ENCODE measurements at regions of chr19 and their contacts with region 1.

Region 1: DNA sequence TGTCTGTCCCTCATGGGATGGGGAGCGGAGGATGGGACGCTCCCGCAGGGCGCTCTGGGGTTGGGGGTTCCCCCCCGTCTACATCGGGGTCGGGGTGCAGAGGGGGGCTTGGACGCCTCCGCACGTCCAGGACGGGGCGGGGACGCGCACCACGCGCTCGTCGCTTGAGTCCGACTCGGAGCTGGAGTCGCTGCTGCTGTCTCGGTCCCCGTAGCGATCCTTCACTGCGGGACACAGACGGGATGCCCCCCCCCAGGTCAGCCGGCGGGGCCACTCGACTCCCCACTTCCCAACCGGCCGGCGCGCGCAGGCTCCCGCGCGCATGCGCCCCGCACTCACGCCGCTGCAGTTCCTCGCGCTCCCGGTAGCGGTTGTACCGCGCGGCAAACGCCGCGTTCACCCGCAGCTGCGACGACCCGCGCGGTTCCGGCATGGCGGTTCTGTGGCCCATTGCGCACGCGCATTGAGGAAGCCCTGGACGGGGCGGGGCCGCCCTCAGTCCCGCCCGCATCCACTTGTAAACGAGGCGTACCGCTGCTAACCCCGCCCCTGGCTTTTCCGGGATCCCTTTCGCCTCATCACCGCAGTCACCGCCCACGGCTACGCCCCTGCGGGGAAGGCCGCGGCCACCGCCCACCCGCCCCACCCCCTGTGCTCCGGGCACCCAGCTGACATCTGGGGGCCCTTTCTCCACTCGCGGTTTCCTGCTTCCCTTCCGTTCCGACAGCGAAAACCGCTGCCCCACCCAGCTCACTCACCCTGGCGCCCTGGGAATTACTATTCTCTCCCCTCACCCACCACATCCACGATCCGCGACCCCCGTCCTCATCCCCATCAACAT is at the start of gene KRI1:
- DNase-seq: peak; percentile 93
- H3K4me3 ChIP-seq: peak within 1 kb of the TSS; percentile 88 to 97 (median 92)
- H3K27ac ChIP-seq: peak within 1 kb of the TSS; percentile 88 to 97 (median 93)
- H3K4me1 ChIP-seq: peaks cover 33 to 56% (median 34%) of the 10 kb centered on the region in 3 donors
- H3K27me3 ChIP-seq: no peaks in the 10 kb centered on the region
- CTCF ChIP-seq: peak in 5 of 6 experiments; percentile 17 to 77 (median 60)
- POLR2A ChIP-seq: peak in 3 of 4 donors; percentile 64 to 94 (median 65)
- total RNA-seq, gene KRI1: 18.2 to 30.3 (median 23.9) TPM

Region 2: DNA sequence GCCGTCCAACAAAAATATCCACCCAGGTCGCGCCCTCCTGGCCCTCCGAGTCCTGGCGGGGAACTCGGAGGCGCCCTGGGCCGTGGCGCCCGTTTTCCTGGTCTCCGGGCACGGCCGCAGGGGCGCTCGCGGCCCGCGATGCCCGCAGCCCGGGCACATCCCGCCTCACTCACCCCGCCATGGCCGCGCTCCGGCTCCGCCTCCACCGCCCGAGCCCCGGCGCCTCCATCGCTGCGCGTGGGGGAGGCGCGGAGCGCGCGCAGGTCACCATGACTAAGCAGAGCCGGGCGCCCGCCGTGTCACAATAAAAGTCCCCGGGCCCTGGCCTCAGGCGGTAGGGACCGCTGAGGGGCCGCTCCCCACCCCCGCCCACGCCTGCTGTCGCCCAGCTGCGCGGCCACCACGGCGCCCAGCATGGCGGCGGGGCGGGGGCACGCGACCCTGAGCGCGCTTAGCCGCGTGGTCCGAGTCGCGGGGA is 63.2 kb before region 1 on chr19:
- intact Hi-C with region 1: loop called (anchors 5 kb)
- DNase-seq: peak; percentile 57
- H3K4me3 ChIP-seq: peak overlapping the region; percentile 89 to 97 (median 94)
- H3K27ac ChIP-seq: peak overlapping the region; percentile 98 to 99 (median 98)
- H3K4me1 ChIP-seq: peaks cover 31 to 60% (median 37%) of the 10 kb centered on the region in 3 donors
- H3K27me3 ChIP-seq: no peaks in the 10 kb centered on the region
- CTCF ChIP-seq: peak in 2 of 6 experiments; percentile 4 to 18
- POLR2A ChIP-seq: peak in 2 of 4 donors; percentile 73 to 86

Region 3: DNA sequence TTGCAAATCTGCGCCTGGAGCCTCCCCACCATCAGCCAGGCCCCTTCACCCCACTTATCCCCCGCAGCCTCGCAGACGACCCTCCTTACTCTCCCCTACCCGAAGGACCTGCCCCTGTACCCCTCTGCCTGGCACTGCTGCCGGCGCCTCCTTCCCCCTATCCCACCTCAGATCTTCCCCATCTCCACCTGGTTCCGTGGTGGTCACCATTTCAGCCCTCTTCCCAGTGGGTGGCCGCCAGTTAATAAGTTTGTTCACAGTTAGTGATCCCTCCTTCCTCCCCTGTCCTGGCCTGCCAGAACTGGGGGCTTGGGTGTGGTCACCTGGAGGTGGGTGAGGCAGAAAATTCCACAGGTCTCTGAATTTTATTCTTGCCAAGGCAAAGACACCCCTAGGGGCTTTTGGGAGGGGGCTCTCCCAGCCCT is 60.0 kb after region 1 on chr19:
- intact Hi-C with region 1: no loop called
- DNase-seq: no peak
- H3K4me3 ChIP-seq: peak overlapping the region; percentile 68 to 89 (median 84)
- H3K27ac ChIP-seq: peak overlapping the region; percentile 89 to 97 (median 94)
- H3K4me1 ChIP-seq: peaks cover 11 to 63% (median 30%) of the 10 kb centered on the region in 3 donors
- H3K27me3 ChIP-seq: no peaks in the 10 kb centered on the region
- CTCF ChIP-seq: no peak
- POLR2A ChIP-seq: no peak